Transverse colon (tissue), 4 donors: ENCODE measurements at regions of chr2 and their contacts with region 1.

Region 1: GRCh38 chr2:156452971-156453370 is 16.8 kb downstream of the GPD2 start:
- DNase-seq: no peak
- H3K4me3 ChIP-seq: no peak overlapping the region
- H3K27ac ChIP-seq: no peak overlapping the region
- H3K4me1 ChIP-seq: peaks cover 0 to 21% (median 0%) of the 10 kb centered on the region in 4 donors
- H3K27me3 ChIP-seq: no peaks in the 10 kb centered on the region
- CTCF ChIP-seq: no peak
- EP300 ChIP-seq: no peak
- POLR2A ChIP-seq: no peak

Region 2: GRCh38 chr2:156435715-156436496 is 17.1 kb before region 1 on chr2 and contains the start of gene GPD2:
- in situ Hi-C with region 1: no loop called
- intact Hi-C with region 1: no loop called
- DNase-seq: peak; percentile 92
- H3K4me3 ChIP-seq: peak within 1 kb of the TSS; percentile 45 to 79 (median 54)
- H3K27ac ChIP-seq: peak within 1 kb of the TSS; percentile 93 to 96 (median 96)
- H3K4me1 ChIP-seq: peaks cover 0 to 45% (median 29%) of the 10 kb centered on the region in 4 donors
- H3K27me3 ChIP-seq: no peaks in the 10 kb centered on the region
- CTCF ChIP-seq: peak in 1 of 5 experiments; percentile 40
- EP300 ChIP-seq: no peak
- POLR2A ChIP-seq: peak; percentile 90
- total RNA-seq, gene GPD2: 65.5 to 161 (median 98.6) TPM

Region 3: DNA sequence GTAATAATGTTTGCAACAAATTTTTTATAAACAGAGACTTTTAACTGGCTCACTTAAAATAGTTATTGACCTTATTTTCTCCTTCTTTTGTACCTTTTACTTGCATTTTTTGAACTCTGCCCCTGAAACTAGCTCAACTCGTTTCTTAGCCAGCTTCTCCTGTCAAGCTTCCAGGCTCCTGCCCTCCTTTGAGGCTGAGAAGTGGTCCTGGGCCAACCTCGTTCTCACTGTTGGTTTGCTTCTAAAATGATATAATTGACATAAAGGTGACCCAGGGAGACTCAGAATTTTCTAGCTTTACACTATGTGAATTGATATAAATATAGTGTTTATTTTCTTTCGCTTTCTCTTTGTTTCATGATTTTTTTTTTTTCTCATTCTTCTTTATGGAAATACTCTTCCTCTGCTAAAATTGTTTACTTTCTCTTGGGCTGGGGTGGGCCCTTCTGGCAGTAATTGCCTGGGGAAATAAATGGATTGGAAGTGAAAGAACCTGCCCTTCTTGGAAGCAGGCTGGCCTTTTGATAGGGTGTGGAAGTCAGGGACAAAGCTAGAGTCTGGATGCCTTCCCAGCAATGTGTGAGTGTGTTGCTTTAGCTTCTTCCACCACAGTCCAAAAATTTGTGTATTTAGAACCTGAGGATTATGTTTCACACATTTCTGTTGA is 13.9 kb after region 1 on chr2:
- in situ Hi-C with region 1: no loop called
- intact Hi-C with region 1: loop called (anchors 1 kb)
- DNase-seq: peak; percentile 54
- H3K4me3 ChIP-seq: peak overlapping the region in 1 of 4 donors; percentile 22
- H3K27ac ChIP-seq: peak overlapping the region; percentile 65 to 76 (median 69)
- H3K4me1 ChIP-seq: peaks cover 2 to 57% (median 21%) of the 10 kb centered on the region in 4 donors
- H3K27me3 ChIP-seq: no peaks in the 10 kb centered on the region
- CTCF ChIP-seq: no peak
- EP300 ChIP-seq: no peak
- POLR2A ChIP-seq: no peak

Region 4: GRCh38 chr2:157067562-157067961 is 614.6 kb after region 1 on chr2:
- in situ Hi-C with region 1: no loop called
- intact Hi-C with region 1: no loop called
- DNase-seq: no peak
- H3K4me3 ChIP-seq: no peak overlapping the region
- H3K27ac ChIP-seq: no peak overlapping the region
- H3K4me1 ChIP-seq: no peaks in the 10 kb centered on the region
- H3K27me3 ChIP-seq: no peaks in the 10 kb centered on the region
- CTCF ChIP-seq: no peak
- EP300 ChIP-seq: no peak
- POLR2A ChIP-seq: no peak